ENCODE measurements at regions of chr21 and their contacts with region 1.

Region 1: DNA sequence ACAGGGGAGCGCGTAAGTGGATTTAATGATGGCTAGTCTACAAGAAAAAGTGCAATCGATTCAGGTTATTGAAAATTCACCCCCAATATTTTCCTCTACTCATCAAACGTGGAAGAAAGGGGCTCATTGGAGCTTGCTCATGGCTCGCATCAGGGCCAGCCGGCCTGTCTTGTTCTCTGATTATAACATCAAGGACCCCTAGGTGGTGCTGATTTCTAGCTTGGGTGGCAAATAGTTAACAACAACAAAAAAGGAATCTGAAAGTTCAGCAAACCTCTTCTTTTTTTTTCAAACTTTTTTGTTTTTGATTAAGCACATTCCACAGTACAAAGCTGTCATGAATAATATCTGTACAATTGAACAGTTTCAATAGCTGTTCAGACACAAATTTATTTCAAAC is 35.8 kb upstream of the SOD1 start:
- DNase-seq: no peak
- H3K4me3 ChIP-seq: no peak overlapping the region
- H3K27ac ChIP-seq: no peak overlapping the region
- H3K4me1 ChIP-seq: no peaks in the 10 kb centered on the region
- H3K27me3 ChIP-seq: no peaks in the 10 kb centered on the region
- CTCF ChIP-seq: peak in 1 of 2 donors; percentile 7

Region 2: GRCh38 chr21:31592963-31593560 is 30.6 kb before region 1 on chr21:
- CTCF ChIA-PET with region 1: no interaction called
- dilution Hi-C with region 1: no loop called
- in situ Hi-C with region 1: no loop called
- intact Hi-C with region 1: no loop called
- DNase-seq: no peak
- H3K4me3 ChIP-seq: no peak overlapping the region
- H3K27ac ChIP-seq: no peak overlapping the region
- H3K4me1 ChIP-seq: no peaks in the 10 kb centered on the region
- H3K27me3 ChIP-seq: peaks cover 3% of the 10 kb centered on the region
- CTCF ChIP-seq: no peak

Region 3: GRCh38 chr21:31665397-31665796 is 41.7 kb after region 1 on chr21:
- CTCF ChIA-PET with region 1: no interaction called
- dilution Hi-C with region 1: loop called (anchors 5 kb)
- in situ Hi-C with region 1: no loop called
- intact Hi-C with region 1: no loop called
- DNase-seq: peak; percentile 20
- H3K4me3 ChIP-seq: no peak overlapping the region
- H3K27ac ChIP-seq: no peak overlapping the region
- H3K4me1 ChIP-seq: peaks cover 20% of the 10 kb centered on the region
- H3K27me3 ChIP-seq: no peaks in the 10 kb centered on the region
- CTCF ChIP-seq: no peak